Activated CD4-positive, alpha-beta T cell treated with anti-CD3 and anti-CD28 coated beads for 36 hours (primary cell): ENCODE measurements at regions of chr1 and their contacts with region 1.

Region 1: GRCh38 chr1:197924516-197925123 is 7.4 kb downstream of the LHX9 start:
- DNase-seq: peak; percentile 54
- ATAC-seq: peak; percentile 70
- H3K4me3 Mint-ChIP-seq: no peak overlapping the region
- H3K27ac Mint-ChIP-seq: no peak overlapping the region
- H3K4me1 Mint-ChIP-seq: peaks cover 21% of the 10 kb centered on the region
- H3K27me3 Mint-ChIP-seq: peaks cover 64% of the 10 kb centered on the region

Region 2: DNA sequence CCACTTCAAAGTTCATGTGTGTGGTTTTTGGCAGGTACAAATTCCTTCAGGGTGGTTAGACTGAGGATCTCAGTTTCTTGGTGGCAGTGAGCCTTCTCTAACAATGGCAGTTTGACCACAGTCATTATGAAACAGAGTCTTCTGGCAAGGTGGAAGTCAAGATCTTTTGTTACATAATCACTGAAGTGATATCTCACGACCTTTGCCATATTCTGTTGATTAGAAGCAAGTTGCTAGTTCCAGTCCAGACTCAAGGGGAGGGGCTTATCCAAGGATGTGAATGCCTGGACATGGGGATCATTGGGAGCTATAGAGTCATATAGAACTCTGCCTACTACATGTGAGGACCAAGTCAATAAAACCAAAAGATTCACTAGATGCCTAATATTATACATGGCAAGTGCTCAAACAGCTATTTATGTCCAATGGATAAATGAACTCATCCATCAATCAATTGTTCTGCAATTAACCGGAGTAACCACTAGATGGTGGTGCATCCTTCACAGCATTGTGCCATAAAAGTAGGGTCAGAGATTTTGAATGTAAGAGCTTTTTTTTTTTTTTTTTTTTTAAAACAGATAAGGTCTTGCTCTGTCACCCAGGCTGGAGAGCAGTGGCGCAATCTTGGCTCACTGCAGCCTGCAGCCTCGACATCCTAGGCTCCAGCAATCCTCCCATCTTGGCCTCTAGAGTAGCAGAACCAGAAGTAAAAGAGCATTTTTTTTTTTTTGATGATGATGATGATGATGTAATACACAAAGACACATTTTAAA is 524.7 kb before region 1 on chr1:
- CTCF ChIA-PET with region 1: no interaction called
- POLR2A ChIA-PET with region 1: no interaction called
- intact Hi-C with region 1: loop called in 1 of 2 experiments (anchors 5 kb)
- DNase-seq: peak; percentile 26
- ATAC-seq: peak; percentile 70
- H3K4me3 Mint-ChIP-seq: no peak overlapping the region
- H3K27ac Mint-ChIP-seq: no peak overlapping the region
- H3K4me1 Mint-ChIP-seq: peaks cover 3% of the 10 kb centered on the region
- H3K27me3 Mint-ChIP-seq: peaks cover 6% of the 10 kb centered on the region

Region 3: GRCh38 chr1:197614916-197615692 is 309.5 kb before region 1 on chr1:
- CTCF ChIA-PET with region 1: interaction called, 13 read pairs
- POLR2A ChIA-PET with region 1: no interaction called
- intact Hi-C with region 1: loop called (anchors 1 to 2 kb)
- DNase-seq: peak; percentile 54
- ATAC-seq: peak; percentile 70
- H3K4me3 Mint-ChIP-seq: no peak overlapping the region
- H3K27ac Mint-ChIP-seq: no peak overlapping the region
- H3K4me1 Mint-ChIP-seq: no peaks in the 10 kb centered on the region
- H3K27me3 Mint-ChIP-seq: no peaks in the 10 kb centered on the region

Region 4: GRCh38 chr1:197902454-197903195 is 22.0 kb before region 1 on chr1 and contains the start of gene C1orf53:
- CTCF ChIA-PET with region 1: interaction called, 13 read pairs
- POLR2A ChIA-PET with region 1: no interaction called
- intact Hi-C with region 1: no loop called
- DNase-seq: peak; percentile 87
- ATAC-seq: peak; percentile 95
- H3K4me3 Mint-ChIP-seq: peak within 1 kb of the TSS; percentile 76
- H3K27ac Mint-ChIP-seq: peak within 1 kb of the TSS; percentile 88
- H3K4me1 Mint-ChIP-seq: peaks cover 14% of the 10 kb centered on the region
- H3K27me3 Mint-ChIP-seq: peaks cover 37% of the 10 kb centered on the region
- total RNA-seq, gene C1orf53: 0.66 TPM in 1 of 2 experiments, not detected in the other

Region 5: GRCh38 chr1:198359024-198359653 is 434.5 kb after region 1 on chr1:
- CTCF ChIA-PET with region 1: no interaction called
- POLR2A ChIA-PET with region 1: no interaction called
- intact Hi-C with region 1: loop called in 1 of 2 experiments (anchors 10 kb)
- DNase-seq: no peak
- ATAC-seq: no peak
- H3K4me3 Mint-ChIP-seq: no peak overlapping the region
- H3K27ac Mint-ChIP-seq: no peak overlapping the region
- H3K4me1 Mint-ChIP-seq: peaks cover 5% of the 10 kb centered on the region
- H3K27me3 Mint-ChIP-seq: no peaks in the 10 kb centered on the region